PC-3 (cell line): ENCODE measurements at regions of chr2 and their contacts with region 1.

Region 1: GRCh38 chr2:121243821-121244460 is 41.1 kb downstream of the TFCP2L1 start:
- DNase-seq: no peak
- ATAC-seq: no peak
- H3K4me3 ChIP-seq: no peak overlapping the region
- H3K27ac ChIP-seq: no peak overlapping the region
- H3K4me1 ChIP-seq: no peaks in the 10 kb centered on the region
- H3K27me3 ChIP-seq: no peaks in the 10 kb centered on the region
- CTCF ChIP-seq: no peak

Region 2: DNA sequence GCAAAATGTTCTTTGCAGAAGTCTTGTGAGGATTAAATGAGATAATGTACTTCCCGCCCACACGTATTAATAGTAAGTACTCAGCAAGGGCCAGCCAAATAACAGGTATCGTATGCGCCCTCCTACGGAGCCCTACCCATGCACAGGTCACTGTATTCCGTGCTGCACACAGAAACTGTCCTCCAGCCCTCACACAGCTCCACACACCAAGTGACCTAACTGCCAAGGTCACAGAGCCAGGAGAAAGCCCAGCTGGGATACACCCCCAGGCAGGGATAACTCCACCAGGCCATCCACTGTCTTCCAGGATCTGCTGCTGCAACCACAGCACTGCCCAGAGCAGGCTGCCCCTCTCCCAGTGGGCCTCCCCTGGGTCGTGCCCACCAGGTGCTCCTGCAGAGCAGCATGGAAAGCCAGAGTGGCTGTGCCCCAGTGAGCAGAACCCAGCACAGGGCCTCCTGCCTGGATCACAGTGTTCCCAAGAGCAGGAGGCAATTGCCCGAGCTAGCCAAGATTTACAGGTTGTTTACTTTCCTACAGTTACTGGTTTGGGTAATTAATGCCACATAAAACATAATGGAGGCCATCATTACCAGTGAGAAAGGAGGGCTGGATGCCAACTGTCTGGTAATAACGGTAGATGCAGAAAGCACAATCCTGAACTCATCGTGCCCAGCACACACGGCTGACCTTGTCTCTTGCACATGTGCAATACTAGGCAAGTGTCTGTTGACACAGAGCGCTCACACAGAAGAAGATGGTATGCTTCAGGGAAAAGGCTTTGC is 16.6 kb after region 1 on chr2:
- CTCF ChIA-PET with region 1: no interaction called
- POLR2A ChIA-PET with region 1: interaction called, 12 read pairs
- intact Hi-C with region 1: no loop called
- DNase-seq: no peak
- ATAC-seq: no peak
- H3K4me3 ChIP-seq: no peak overlapping the region
- H3K27ac ChIP-seq: no peak overlapping the region
- H3K4me1 ChIP-seq: no peaks in the 10 kb centered on the region
- H3K27me3 ChIP-seq: no peaks in the 10 kb centered on the region
- CTCF ChIP-seq: no peak